GM18951 (cell line): ENCODE measurements at regions of chr10 and their contacts with region 1.

Region 1: GRCh38 chr10:79929409-79929904 is 19.4 kb downstream of the SFTPD start:
- POLR2A ChIP-seq: no peak

Region 2: DNA sequence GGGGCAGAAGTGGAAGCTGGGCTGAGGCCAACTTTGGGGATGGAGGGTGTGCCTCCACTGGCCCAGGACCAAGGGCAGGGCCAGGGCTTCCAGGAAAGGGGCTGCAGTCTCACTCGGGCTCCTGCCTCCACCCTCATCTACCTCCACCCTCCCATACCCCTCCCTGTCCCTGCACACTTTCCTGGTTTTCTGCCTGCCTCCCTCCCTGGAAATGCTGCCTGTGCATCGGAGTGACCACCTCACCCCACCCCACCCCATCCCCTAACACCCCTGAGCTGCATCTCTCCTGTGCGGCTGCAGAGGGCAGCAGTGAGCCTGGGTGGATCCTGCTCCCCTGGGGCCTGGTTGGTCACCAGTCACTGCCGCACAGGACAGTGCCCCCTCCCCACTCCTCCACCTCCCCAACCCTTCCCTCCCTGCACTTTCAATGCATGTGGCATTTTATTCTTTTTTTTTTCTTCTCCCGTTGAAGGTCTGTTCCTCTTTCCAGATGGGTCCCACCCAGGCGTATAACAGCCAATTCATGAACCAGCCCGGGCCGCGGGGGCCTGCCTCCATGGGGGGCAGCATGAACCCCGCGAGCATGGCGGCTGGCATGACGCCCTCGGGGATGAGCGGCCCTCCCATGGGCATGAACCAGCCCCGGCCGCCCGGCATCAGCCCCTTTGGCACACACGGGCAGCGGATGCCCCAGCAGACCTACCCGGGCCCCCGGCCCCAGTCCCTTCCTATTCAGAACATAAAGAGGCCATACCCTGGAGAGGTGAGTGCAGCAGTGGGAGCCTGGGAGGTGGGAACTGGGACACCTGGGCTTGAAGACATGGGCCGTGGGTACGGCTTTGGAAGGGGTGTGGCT is 636.3 kb before region 1 on chr10:
- in situ Hi-C with region 1: no loop called
- POLR2A ChIP-seq: no peak

Region 3: GRCh38 chr10:79562135-79562756 is 367.2 kb before region 1 on chr10:
- in situ Hi-C with region 1: loop called (anchors 25 kb)
- POLR2A ChIP-seq: no peak

Region 4: GRCh38 chr10:80253266-80254245 is 324.1 kb after region 1 on chr10:
- in situ Hi-C with region 1: loop called (anchors 25 kb)
- POLR2A ChIP-seq: no peak